ENCODE measurements at regions of chr7 and their contacts with region 1.

Region 1: DNA sequence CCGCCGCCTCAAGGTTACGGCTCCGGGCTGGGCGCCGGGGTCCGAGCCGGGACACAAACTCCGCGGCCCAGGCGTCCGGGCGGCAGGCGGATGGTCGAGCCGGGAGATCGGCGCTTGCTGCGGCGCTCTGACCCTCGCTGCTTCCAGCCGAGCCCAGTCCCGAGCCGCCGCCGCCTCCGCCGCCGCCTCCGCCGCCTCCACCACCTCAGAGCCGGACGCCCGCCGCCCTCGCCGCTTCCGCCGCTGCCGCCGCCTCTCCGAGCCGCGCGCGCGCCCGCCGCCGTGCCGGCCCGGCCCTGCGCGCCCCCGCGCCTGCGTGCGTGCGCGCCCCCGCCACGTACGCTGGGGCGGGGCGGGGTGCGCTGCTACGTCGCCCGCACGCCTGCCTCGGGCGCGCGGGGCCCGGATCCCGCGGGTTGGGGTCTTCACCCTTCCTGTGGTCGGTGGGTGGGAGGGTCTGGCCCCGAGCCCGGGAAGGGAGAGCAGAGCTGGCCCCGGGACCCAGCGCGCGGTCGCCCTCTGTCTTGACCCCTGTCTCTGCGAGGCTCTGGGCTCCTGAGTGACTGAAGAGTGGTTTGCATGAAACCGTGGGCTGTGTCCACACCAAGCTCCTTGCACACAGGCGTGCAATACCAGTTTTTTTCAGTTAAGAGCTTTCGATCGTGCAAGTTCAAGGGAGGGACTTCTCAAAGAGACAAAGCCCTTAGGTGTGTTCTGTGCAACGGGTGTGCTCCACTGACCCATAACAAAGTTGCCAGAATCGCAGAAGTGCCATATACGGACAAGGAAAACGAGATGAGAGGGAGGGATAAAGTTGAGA is at the start of gene SMURF1:
- DNase-seq: peak in 1 of 2 experiments; percentile 79
- H3K4me3 ChIP-seq: peak within 1 kb of the TSS; percentile 75
- H3K27ac ChIP-seq: peak within 1 kb of the TSS; percentile 82
- H3K4me1 ChIP-seq: peaks cover 33% of the 10 kb centered on the region
- H3K27me3 ChIP-seq: no peaks in the 10 kb centered on the region
- CTCF ChIP-seq: no peak
- total RNA-seq, gene SMURF1: 53.2 and 63.9 TPM in 2 replicates

Region 2: DNA sequence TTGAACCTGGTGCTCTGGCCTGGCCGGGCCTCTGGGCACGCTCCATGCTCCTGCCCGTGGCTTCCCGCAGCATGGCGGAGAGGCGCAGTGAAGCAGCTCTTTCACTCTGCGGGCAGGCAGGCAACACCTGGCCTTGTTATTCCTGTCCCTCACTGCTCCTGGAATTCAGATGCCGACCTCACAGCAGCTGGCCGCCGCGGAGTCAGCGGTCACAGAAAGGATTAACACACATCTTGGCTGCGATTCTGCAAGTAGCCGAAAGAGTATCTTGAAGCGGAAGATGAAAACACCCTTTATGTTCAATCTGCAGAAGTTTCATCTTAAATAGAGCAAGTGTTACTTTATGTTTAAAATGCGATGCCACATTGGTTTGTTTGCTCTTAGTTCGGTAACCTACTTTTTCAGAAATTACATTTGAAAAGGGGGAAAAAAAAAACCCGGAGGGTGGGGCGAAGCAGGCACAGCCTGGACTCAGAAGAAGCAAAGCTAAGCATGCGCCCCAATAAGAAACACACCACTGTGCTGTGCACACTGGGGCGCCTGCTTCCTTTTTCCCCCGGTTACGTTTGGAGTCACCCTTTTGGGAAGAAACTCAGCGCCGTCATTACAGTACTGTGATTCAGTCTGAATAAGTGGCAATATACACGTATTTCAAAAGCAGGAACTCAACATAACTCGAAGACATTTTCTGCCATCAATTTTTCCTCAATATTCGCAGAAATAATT is 820.3 kb before region 1 on chr7:
- CTCF ChIA-PET with region 1: no interaction called
- POLR2A ChIA-PET with region 1: interaction called, 24 read pairs
- intact Hi-C with region 1: no loop called
- DNase-seq: no peak
- H3K4me3 ChIP-seq: no peak overlapping the region
- H3K27ac ChIP-seq: no peak overlapping the region
- H3K4me1 ChIP-seq: no peaks in the 10 kb centered on the region
- H3K27me3 ChIP-seq: no peaks in the 10 kb centered on the region
- CTCF ChIP-seq: no peak

Region 3: DNA sequence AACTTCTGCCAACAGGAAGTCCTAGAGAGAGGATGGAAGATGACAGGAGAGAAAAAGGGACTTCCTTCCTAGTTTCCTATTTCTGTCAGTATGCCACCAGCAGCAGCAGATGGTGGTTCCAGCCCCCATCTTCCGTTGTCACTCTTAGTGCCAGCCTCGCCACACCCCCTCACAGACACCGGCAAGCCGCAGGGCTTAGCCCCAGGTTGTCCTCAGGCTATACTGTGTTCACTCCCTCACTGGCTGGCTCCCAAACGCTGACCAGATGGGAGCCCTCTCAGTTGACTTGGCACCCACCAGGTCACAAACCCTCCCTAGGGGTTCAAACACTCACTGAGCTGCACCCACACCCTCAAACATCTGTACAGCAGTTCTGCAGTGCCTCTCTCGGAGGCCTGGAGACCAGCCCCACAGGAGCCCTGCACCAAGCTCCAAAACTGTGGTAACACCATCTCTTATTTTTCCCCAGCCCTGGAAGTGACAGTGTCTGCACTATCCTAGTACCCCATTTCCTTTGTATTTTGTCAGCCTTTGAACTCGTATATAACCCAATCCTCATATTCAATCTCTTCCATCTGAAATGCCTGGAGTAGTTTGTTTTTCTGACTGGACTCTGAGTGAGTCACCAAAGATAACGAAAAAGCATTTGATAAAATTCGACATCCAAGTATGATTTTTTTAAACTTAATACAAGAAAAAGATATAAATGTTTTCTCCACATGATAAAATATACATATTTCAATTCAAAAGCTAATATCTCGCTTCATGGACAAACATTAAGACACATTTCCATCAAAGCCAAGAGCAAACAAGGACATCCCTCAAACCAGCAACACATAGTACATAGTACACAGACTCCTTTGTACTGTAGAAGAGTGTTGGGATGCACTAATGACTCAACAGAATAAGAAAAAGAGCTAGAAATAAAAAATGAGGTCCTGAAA is 34.7 kb before region 1 on chr7:
- CTCF ChIA-PET with region 1: no interaction called
- POLR2A ChIA-PET with region 1: no interaction called
- intact Hi-C with region 1: loop called (anchors 2 kb)
- DNase-seq: peak; percentile 59 to 70
- H3K4me3 ChIP-seq: no peak overlapping the region
- H3K27ac ChIP-seq: peak overlapping the region; percentile 52
- H3K4me1 ChIP-seq: peaks cover 95% of the 10 kb centered on the region
- H3K27me3 ChIP-seq: no peaks in the 10 kb centered on the region
- CTCF ChIP-seq: no peak

Region 4: GRCh38 chr7:99210264-99210970 is 66.4 kb after region 1 on chr7:
- CTCF ChIA-PET with region 1: interaction called, 3 read pairs
- POLR2A ChIA-PET with region 1: interaction called, 33 read pairs
- intact Hi-C with region 1: loop called (anchors 1 kb)
- DNase-seq: peak; percentile 52 to 99
- H3K4me3 ChIP-seq: peak overlapping the region; percentile 20; the same call in 1 of the 2 replicates
- H3K27ac ChIP-seq: peak overlapping the region; percentile 100
- H3K4me1 ChIP-seq: peaks cover 70% of the 10 kb centered on the region
- H3K27me3 ChIP-seq: no peaks in the 10 kb centered on the region
- CTCF ChIP-seq: no peak

Region 5: GRCh38 chr7:99312316-99313203 is 168.5 kb after region 1 on chr7:
- CTCF ChIA-PET with region 1: interaction called, 3 read pairs
- POLR2A ChIA-PET with region 1: interaction called, 10 read pairs
- intact Hi-C with region 1: loop called (anchors 2 kb)
- DNase-seq: peak; percentile 57 to 72
- H3K4me3 ChIP-seq: no peak overlapping the region
- H3K27ac ChIP-seq: no peak overlapping the region
- H3K4me1 ChIP-seq: peaks cover 7% of the 10 kb centered on the region
- H3K27me3 ChIP-seq: no peaks in the 10 kb centered on the region
- CTCF ChIP-seq: peak; percentile 95

Region 6: DNA sequence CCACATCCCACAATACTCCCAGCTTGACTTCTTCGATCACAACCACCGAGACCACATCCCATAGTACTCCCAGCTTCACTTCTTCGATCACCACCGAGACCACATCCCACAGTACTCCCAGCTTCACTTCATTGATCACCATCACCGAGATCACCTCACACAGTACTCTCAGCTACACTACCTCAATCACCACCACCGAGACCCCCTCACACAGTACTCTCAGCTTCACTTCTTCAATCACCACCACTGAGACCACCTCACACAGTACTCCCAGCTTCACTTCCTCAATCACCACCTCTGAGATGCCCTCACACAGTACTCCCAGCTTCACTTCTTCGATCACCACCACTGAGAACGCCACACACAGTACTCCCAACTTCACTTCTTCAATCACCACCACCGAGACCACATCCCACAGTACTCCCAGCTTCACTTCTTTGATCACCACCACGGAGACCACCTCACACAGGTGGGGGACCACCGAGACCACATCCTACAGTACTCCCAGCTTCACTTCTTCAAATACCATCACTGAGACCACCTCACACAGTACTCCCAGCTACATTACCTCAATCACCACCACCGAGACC is 1813.9 kb after region 1 on chr7:
- CTCF ChIA-PET with region 1: no interaction called
- POLR2A ChIA-PET with region 1: interaction called, 30 read pairs
- intact Hi-C with region 1: no loop called
- DNase-seq: no peak
- H3K4me3 ChIP-seq: no peak overlapping the region
- H3K27ac ChIP-seq: no peak overlapping the region
- H3K4me1 ChIP-seq: no peaks in the 10 kb centered on the region
- H3K27me3 ChIP-seq: peaks cover 85% of the 10 kb centered on the region
- CTCF ChIP-seq: no peak